ENCODE measurements at regions of chr14 and their contacts with region 1.

Region 1: DNA sequence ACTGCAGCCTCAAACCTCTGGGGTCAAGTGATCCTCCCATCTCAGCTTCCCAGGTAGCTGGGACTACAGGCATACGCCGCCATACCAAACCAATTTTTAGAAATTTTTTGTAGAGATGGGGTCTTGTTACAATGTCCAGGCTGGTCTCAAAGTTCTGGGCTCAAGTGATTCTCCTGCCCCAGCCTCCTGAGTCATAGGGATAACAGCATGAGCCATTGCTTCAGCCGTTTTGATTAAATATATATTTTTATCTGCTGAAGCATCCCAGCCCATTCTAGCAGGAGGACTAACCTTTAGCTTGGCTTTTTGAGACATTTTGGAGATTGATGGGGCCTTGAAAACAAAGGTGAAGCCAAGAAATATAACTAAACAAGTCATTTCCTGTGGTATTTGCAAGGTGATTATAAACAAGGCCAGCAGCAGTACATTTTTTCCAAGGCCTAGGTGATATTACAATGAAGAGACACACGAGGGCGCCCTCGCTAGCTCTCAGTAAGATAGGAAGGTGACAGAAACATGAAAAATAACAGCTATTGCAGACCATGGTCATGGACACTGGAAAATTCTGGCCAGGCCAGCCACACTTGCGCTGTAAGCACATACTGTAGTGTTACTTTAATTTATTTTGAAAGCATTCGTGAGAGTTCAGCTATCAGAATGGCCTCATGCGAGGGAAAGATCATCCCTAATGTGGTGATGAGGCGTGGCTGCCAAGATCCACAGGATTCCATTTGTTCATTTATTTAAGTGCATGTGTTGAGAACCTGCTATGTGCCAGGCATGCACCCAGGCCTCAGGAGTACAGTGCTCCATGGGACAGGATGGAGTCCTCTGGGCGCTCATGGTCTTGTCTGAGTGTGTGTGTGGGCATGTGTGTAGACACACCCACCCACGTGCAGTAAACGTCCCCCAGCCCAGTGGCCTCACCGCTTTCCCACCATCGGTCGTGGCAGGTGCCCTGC is 63.5 kb downstream of the DGLUCY start:
- DNase-seq: peak; percentile 74
- H3K4me3 Mint-ChIP-seq: no peak overlapping the region
- H3K27ac Mint-ChIP-seq: peak overlapping the region; percentile 84
- H3K4me1 Mint-ChIP-seq: peaks cover 24% of the 10 kb centered on the region
- H3K27me3 Mint-ChIP-seq: no peaks in the 10 kb centered on the region

Region 2: GRCh38 chr14:90903101-90903500 is 274.3 kb before region 1 on chr14:
- CTCF ChIA-PET with region 1: interaction called, 21 read pairs
- POLR2A ChIA-PET with region 1: no interaction called
- DNase-seq: peak; percentile 76
- H3K4me3 Mint-ChIP-seq: no peak overlapping the region
- H3K27ac Mint-ChIP-seq: no peak overlapping the region
- H3K4me1 Mint-ChIP-seq: peaks cover 26% of the 10 kb centered on the region
- H3K27me3 Mint-ChIP-seq: no peaks in the 10 kb centered on the region

Region 3: DNA sequence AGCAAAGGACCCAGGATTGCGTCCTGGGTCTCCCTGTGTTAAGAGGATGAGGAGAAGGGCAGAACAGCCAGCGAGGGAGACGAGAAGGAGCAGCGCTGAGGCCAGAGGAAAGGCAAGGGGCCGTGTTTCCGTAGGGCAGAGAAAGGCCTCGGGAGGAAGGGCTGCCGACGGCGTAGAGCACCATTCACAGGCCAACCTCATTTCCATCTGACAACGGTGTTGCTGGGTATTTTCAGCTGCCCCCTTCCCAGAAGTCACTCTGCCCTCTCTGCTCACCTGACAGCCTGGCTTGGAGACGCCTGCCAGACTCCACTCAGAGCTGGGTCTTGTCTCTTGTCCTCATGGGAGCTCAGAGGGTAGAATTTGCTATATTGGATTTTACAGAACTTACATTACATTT is 15.7 kb after region 1 on chr14:
- CTCF ChIA-PET with region 1: interaction called, 21 read pairs
- POLR2A ChIA-PET with region 1: no interaction called
- DNase-seq: no peak
- H3K4me3 Mint-ChIP-seq: no peak overlapping the region
- H3K27ac Mint-ChIP-seq: peak overlapping the region; percentile 25
- H3K4me1 Mint-ChIP-seq: peaks cover 61% of the 10 kb centered on the region
- H3K27me3 Mint-ChIP-seq: no peaks in the 10 kb centered on the region

Region 4: DNA sequence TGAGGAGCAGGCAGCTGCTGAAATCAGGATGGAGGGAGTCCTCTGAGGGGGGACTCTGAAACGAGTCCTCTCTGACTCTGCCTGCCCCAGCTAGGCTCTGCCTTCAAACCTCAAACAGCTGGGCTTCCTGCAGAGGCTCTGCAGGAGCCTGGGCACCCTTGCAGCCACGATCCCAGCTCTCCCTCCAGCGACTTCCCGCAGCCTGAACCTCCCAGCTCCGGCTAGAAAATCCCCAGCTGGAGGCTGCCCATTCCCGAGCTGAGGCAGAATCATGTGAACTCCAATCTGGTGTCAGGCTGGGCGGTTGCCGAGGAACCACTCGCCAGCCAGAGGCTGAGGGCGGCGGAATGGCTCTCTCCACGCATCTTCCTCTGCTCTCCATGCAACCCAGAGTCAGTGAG is 67.1 kb after region 1 on chr14 and contains the start of gene GPR68:
- CTCF ChIA-PET with region 1: interaction called, 20 read pairs
- POLR2A ChIA-PET with region 1: no interaction called
- DNase-seq: peak; percentile 51
- H3K4me3 Mint-ChIP-seq: peak within 1 kb of the TSS; percentile 92
- H3K27ac Mint-ChIP-seq: peak within 1 kb of the TSS; percentile 100
- H3K4me1 Mint-ChIP-seq: peaks cover 92% of the 10 kb centered on the region
- H3K27me3 Mint-ChIP-seq: no peaks in the 10 kb centered on the region
- total RNA-seq, gene GPR68: 32.7 to 33.0 TPM

Region 5: GRCh38 chr14:91258011-91258618 is 80.8 kb after region 1 on chr14:
- CTCF ChIA-PET with region 1: interaction called, 29 read pairs
- POLR2A ChIA-PET with region 1: no interaction called
- DNase-seq: no peak
- H3K4me3 Mint-ChIP-seq: no peak overlapping the region
- H3K27ac Mint-ChIP-seq: peak overlapping the region; percentile 17
- H3K4me1 Mint-ChIP-seq: peaks cover 81% of the 10 kb centered on the region
- H3K27me3 Mint-ChIP-seq: no peaks in the 10 kb centered on the region

Region 6: GRCh38 chr14:91367173-91368171 is 190.1 kb after region 1 on chr14:
- CTCF ChIA-PET with region 1: no interaction called
- POLR2A ChIA-PET with region 1: no interaction called
- DNase-seq: peak; percentile 69
- H3K4me3 Mint-ChIP-seq: peak overlapping the region; percentile 53
- H3K27ac Mint-ChIP-seq: peak overlapping the region; percentile 75
- H3K4me1 Mint-ChIP-seq: peaks cover 82% of the 10 kb centered on the region
- H3K27me3 Mint-ChIP-seq: no peaks in the 10 kb centered on the region

Measured in activated CD4-positive, alpha-beta T cell treated with anti-CD3 and anti-CD28 coated beads, Interleukin-2, amount 10 ng/mL, durations not matched to agents 7 days and 5 days (primary cell).